ENCODE measurements at regions of chr12 and their contacts with region 1.

Region 1: GRCh38 chr12:4269279-4269991 is 4.1 kb upstream of the CCND2 start:
- DNase-seq: peak; percentile 98
- H3K4me3 Mint-ChIP-seq: peak overlapping the region; percentile 97
- H3K27ac Mint-ChIP-seq: peak overlapping the region; percentile 97
- H3K4me1 Mint-ChIP-seq: peaks cover 24% of the 10 kb centered on the region
- H3K27me3 Mint-ChIP-seq: peaks cover 16% of the 10 kb centered on the region

Region 2: DNA sequence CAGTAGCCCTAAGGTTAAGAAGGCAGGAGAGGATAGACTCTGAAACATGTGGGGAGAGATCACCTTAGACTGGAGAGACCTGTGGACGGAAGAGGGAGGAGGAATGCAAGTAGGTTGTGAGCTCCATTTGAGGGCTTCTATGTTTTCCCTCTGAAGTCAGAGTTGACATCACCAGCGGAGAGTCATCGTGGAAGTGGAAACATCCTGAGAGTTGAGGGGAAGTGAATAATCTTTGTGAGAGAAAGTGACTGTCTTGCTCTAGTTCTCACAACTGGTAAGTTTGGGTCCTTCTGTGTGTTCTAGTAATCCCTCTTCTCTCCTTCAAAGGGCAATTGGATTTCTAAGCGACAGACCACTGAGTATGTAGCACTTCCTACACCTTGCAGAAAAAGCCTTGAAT is 99.5 kb before region 1 on chr12:
- intact Hi-C with region 1: loop called (anchors 2 kb)
- DNase-seq: peak; percentile 66
- H3K4me3 Mint-ChIP-seq: peak overlapping the region; percentile 5
- H3K27ac Mint-ChIP-seq: peak overlapping the region; percentile 73
- H3K4me1 Mint-ChIP-seq: peaks cover 32% of the 10 kb centered on the region
- H3K27me3 Mint-ChIP-seq: no peaks in the 10 kb centered on the region

Region 3: DNA sequence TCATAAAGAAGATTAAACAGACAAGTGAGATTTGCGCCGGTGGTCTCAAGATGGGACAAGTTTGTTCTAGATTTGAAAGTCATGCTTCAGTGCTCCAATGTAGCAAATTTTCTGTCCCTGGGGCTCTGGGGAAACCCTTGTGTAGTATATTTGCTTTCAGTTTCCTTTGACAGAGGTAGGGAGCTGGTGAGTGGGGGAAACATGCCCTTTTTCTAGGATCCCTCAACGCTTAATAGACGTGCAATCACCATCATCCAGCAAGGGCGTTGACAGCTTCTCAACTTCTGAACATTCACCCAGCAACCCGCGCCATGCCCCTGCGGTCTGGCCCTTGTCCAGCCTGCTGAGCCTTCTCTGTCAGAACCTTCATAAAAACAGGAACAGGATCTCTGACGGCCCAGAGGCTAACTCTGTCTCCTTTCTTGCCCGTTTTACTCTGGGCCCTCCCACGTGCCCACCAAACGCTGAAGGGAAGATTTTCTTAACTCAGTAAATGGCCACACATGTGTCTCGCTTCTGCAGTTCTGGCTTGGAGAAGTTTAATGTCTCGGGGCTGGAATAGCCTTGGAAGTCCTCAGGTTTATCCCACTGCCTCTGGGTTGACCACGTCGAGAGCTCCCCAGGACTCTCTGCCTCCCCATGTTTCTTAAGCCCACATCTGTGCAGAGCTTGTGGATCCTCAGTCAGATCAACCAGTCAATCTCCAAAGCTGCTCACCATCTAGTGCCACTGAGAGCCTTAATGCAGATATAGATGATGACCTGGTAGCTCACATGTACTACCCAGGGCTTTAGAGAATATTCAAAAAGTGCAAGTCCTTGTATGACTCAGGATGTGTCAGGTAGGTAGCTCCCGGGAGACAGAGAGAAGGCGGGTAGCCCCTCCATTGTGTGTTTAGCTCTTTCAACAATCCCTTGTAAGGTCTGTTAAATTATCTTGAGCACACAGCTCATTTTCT is 53.9 kb before region 1 on chr12:
- intact Hi-C with region 1: loop called (anchors 1 kb)
- DNase-seq: peak; percentile 81
- H3K4me3 Mint-ChIP-seq: peak overlapping the region; percentile 72
- H3K27ac Mint-ChIP-seq: peak overlapping the region; percentile 82
- H3K4me1 Mint-ChIP-seq: peaks cover 46% of the 10 kb centered on the region
- H3K27me3 Mint-ChIP-seq: peaks cover 2% of the 10 kb centered on the region

Region 4: GRCh38 chr12:4251216-4251891 is 18.1 kb before region 1 on chr12:
- intact Hi-C with region 1: loop called (anchors 2 kb)
- DNase-seq: no peak
- H3K4me3 Mint-ChIP-seq: no peak overlapping the region
- H3K27ac Mint-ChIP-seq: peak overlapping the region; percentile 13
- H3K4me1 Mint-ChIP-seq: peaks cover 11% of the 10 kb centered on the region
- H3K27me3 Mint-ChIP-seq: peaks cover 9% of the 10 kb centered on the region

Measured in activated CD4-positive, alpha-beta T cell treated with anti-CD3 and anti-CD28 coated beads, Interleukin-2, amount 10 ng/mL, durations not matched to agents 24 days and 14 days (primary cell).